ENCODE measurements at regions of chr12 and their contacts with region 1.

Region 1: GRCh38 chr12:75596406-75596805 is 85.0 kb upstream of the KRR1 start:
- DNase-seq: no peak
- CTCF ChIP-seq: no peak

Region 2: DNA sequence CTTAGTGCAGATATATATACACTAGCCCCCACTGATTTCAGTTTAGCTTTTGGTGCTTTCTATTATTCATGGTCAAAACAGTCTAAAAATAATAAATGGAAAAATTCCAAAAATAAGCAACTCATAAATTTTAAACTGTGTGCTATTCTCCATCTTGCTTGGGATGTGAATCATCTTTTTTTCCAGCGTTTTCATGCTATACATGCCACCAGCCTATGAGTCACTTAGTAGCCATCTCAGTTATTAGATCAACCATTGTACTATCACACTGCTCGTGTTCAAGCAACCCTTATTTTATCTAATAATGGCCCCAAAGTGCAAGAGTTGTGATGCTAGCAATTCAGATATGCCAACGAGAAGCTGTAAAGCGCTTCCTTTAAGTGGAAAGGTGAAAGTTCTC is 11.1 kb before region 1 on chr12:
- CTCF ChIA-PET with region 1: interaction called, 18 read pairs
- POLR2A ChIA-PET with region 1: no interaction called
- DNase-seq: no peak
- CTCF ChIP-seq: no peak

Measured in GM10248 (cell line).